H1 (cell line): ENCODE measurements at regions of chr6 and their contacts with region 1.

Region 1: DNA sequence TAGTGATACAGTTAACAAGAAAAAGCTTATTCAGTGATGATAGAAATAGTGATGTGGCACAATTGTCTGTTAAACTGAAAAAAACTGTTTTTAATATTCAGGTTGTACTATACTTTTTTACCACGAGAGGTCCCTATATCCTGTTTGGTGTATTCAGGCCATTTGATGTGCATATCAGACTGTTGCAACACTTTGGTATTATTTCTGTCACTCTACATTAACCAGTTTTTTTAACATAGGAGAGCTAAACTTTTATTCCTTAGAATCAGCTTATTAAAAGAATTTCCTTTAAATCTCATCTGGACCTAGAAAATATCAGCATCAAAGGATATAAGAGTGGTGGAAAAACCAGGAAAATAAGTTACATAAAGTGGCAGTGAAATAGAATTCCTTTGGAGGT is 36.8 kb downstream of the TSPYL4 start:
- DNase-seq: no peak
- H3K4me3 ChIP-seq: no peak overlapping the region
- H3K27ac ChIP-seq: no peak overlapping the region
- H3K4me1 ChIP-seq: no peaks in the 10 kb centered on the region
- H3K27me3 ChIP-seq: no peaks in the 10 kb centered on the region
- CTCF ChIP-seq: peak in 1 of 3 experiments; percentile 45; a peak in 2 of 4 replicates
- EP300 ChIP-seq: no peak
- POLR2A ChIP-seq: no peak
- RAD21 ChIP-seq: peak; percentile 31 to 36; a peak in 3 of 4 replicates

Region 2: GRCh38 chr6:116139917-116140316 is 77.2 kb before region 1 on chr6:
- CTCF ChIA-PET with region 1: no interaction called
- POLR2A ChIA-PET with region 1: no interaction called
- DNase-seq: no peak
- H3K4me3 ChIP-seq: no peak overlapping the region
- H3K27ac ChIP-seq: no peak overlapping the region
- H3K4me1 ChIP-seq: no peaks in the 10 kb centered on the region
- H3K27me3 ChIP-seq: no peaks in the 10 kb centered on the region
- CTCF ChIP-seq: peak; percentile 30 to 90 (median 68)
- EP300 ChIP-seq: no peak
- POLR2A ChIP-seq: no peak
- RAD21 ChIP-seq: peak; percentile 29 to 43; a peak in 3 of 4 replicates

Region 3: GRCh38 chr6:116206231-116206903 is 10.7 kb before region 1 on chr6:
- CTCF ChIA-PET with region 1: interaction called, 13 read pairs
- POLR2A ChIA-PET with region 1: no interaction called
- DNase-seq: no peak
- H3K4me3 ChIP-seq: no peak overlapping the region
- H3K27ac ChIP-seq: no peak overlapping the region
- H3K4me1 ChIP-seq: no peaks in the 10 kb centered on the region
- H3K27me3 ChIP-seq: peaks cover 0 to 1% (median 0%) of the 10 kb centered on the region in 4 experiments; a peak in 1 of 7 replicates
- CTCF ChIP-seq: no peak
- EP300 ChIP-seq: no peak
- POLR2A ChIP-seq: no peak
- RAD21 ChIP-seq: no peak

Region 4: GRCh38 chr6:116229287-116229913 is 12.3 kb after region 1 on chr6:
- CTCF ChIA-PET with region 1: interaction called, 30 read pairs
- POLR2A ChIA-PET with region 1: interaction called, 9 read pairs
- DNase-seq: peak; percentile 71 to 98
- H3K4me3 ChIP-seq: peak overlapping the region in 1 of 4 experiments; percentile 40; a peak in 3 of 8 replicates
- H3K27ac ChIP-seq: no peak overlapping the region; the same call in 1 of the 2 replicates
- H3K4me1 ChIP-seq: peaks cover 0 to 5% (median 1%) of the 10 kb centered on the region in 4 experiments; a peak in 3 of 7 replicates
- H3K27me3 ChIP-seq: no peaks in the 10 kb centered on the region
- CTCF ChIP-seq: no peak
- EP300 ChIP-seq: no peak
- POLR2A ChIP-seq: peak in 1 of 2 experiments; percentile 58; a peak in 1 of 3 replicates
- RAD21 ChIP-seq: no peak

Region 5: GRCh38 chr6:116352515-116353471 is 135.7 kb after region 1 on chr6:
- CTCF ChIA-PET with region 1: no interaction called
- POLR2A ChIA-PET with region 1: no interaction called
- DNase-seq: no peak
- H3K4me3 ChIP-seq: no peak overlapping the region
- H3K27ac ChIP-seq: no peak overlapping the region
- H3K4me1 ChIP-seq: peaks cover 0 to 7% (median 3%) of the 10 kb centered on the region in 4 experiments; a peak in 4 of 7 replicates
- H3K27me3 ChIP-seq: no peaks in the 10 kb centered on the region
- CTCF ChIP-seq: no peak
- EP300 ChIP-seq: no peak
- POLR2A ChIP-seq: no peak
- RAD21 ChIP-seq: no peak